ENCODE measurements at regions of chr14 and their contacts with region 1.

Region 1: GRCh38 chr14:23776288-23776687 is 140.1 kb downstream of the DHRS2 start:
- DNase-seq: no peak
- ATAC-seq: no peak
- H3K4me3 ChIP-seq: no peak overlapping the region
- H3K27ac ChIP-seq: no peak overlapping the region
- H3K4me1 ChIP-seq: no peaks in the 10 kb centered on the region
- H3K27me3 ChIP-seq: peaks cover 72% of the 10 kb centered on the region
- CTCF ChIP-seq: no peak

Region 2: DNA sequence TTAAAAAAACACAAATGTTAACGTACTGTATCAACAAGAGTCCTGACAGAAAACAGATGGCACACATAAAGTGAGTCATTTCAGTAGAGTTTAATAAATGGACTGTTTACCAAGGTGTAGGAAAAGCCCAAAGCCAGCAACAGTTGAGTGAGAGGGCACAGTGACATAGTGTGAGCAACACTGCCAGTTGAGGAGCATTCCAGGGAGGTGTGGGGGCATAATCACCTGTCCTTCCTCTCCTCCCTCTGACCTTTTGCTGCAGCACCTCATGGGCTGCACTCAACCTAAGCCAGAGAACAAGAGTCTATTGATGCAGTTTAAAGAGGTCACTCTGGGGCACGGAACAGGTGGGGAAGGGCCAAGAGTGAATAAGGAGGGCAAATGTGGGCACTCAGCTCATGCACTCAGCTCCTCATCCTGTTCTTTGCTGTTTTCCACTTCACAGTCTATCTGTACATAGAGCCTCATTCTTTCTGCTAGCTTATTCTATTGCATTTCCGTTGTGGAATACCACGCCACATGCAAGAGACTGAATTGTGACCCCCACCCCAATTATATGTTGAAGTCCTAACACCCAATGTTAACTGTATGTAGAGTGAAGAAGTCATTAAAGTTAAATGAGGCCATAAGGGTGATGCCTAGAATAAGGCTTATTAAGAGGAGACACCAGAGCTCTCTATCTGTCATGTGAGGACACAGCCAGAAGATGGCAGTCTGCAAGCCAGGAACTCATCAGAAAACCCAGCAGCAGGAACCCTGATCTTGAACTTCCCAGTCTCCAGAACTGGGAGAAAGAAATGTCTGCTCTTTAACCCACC is 110.7 kb before region 1 on chr14:
- CTCF ChIA-PET with region 1: interaction called, 18 read pairs
- POLR2A ChIA-PET with region 1: no interaction called
- intact Hi-C with region 1: no loop called
- DNase-seq: peak; percentile 58
- ATAC-seq: peak; percentile 61
- H3K4me3 ChIP-seq: no peak overlapping the region
- H3K27ac ChIP-seq: no peak overlapping the region
- H3K4me1 ChIP-seq: no peaks in the 10 kb centered on the region
- H3K27me3 ChIP-seq: peaks cover 54% of the 10 kb centered on the region
- CTCF ChIP-seq: peak; percentile 64